Calu3 (cell line): ENCODE measurements at regions of chr18 and their contacts with region 1.

Region 1: GRCh38 chr18:21012308-21012707 is 99.3 kb downstream of the ROCK1 start:
- DNase-seq: no peak
- H3K4me3 Mint-ChIP-seq: no peak overlapping the region
- H3K27ac Mint-ChIP-seq: no peak overlapping the region
- H3K4me1 Mint-ChIP-seq: no peaks in the 10 kb centered on the region
- H3K27me3 Mint-ChIP-seq: no peaks in the 10 kb centered on the region
- CTCF ChIP-seq: no peak

Region 2: DNA sequence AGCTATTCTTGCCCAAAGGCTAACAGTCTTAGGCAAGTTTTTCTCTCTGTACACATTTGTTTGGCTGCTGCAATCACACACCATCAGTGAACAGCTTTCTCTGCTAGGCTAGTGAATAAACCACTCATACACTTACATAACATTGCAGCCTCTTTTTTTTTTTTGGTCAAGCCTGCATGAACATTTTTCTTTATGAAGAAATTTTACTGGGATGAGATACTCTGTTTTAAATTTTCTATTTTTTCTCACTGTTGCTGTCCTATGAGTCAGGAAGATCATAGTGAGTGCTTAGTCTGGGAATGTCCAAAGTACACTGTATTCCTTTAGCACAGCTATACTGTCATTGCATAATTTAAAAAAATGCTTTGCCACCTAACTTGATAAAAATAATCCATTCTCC is 40.8 kb after region 1 on chr18:
- CTCF ChIA-PET with region 1: no interaction called
- intact Hi-C with region 1: loop called (anchors 5 kb)
- DNase-seq: no peak
- H3K4me3 Mint-ChIP-seq: no peak overlapping the region
- H3K27ac Mint-ChIP-seq: no peak overlapping the region
- H3K4me1 Mint-ChIP-seq: no peaks in the 10 kb centered on the region
- H3K27me3 Mint-ChIP-seq: no peaks in the 10 kb centered on the region
- CTCF ChIP-seq: no peak